ENCODE measurements at regions of chr5 and their contacts with region 1.

Region 1: GRCh38 chr5:181005791-181006190 is 17.1 kb downstream of the BTNL3 start:
- DNase-seq: no peak
- ATAC-seq: no peak
- H3K4me3 Mint-ChIP-seq: no peak overlapping the region
- H3K27ac Mint-ChIP-seq: no peak overlapping the region
- H3K4me1 Mint-ChIP-seq: no peaks in the 10 kb centered on the region
- H3K27me3 Mint-ChIP-seq: peaks cover 4% of the 10 kb centered on the region
- CTCF ChIP-seq: no peak

Region 2: GRCh38 chr5:180802325-180803180 is 203.2 kb before region 1 on chr5 and contains the start of gene MGAT1:
- CTCF ChIA-PET with region 1: no interaction called
- POLR2A ChIA-PET with region 1: no interaction called
- intact Hi-C with region 1: no loop called
- DNase-seq: peak; percentile 85
- ATAC-seq: peak; percentile 56
- H3K4me3 Mint-ChIP-seq: peak within 1 kb of the TSS; percentile 88
- H3K27ac Mint-ChIP-seq: peak within 1 kb of the TSS; percentile 99
- H3K4me1 Mint-ChIP-seq: peaks cover 70% of the 10 kb centered on the region
- H3K27me3 Mint-ChIP-seq: no peaks in the 10 kb centered on the region
- CTCF ChIP-seq: no peak
- total RNA-seq, gene MGAT1: 161 to 171 TPM

Region 3: DNA sequence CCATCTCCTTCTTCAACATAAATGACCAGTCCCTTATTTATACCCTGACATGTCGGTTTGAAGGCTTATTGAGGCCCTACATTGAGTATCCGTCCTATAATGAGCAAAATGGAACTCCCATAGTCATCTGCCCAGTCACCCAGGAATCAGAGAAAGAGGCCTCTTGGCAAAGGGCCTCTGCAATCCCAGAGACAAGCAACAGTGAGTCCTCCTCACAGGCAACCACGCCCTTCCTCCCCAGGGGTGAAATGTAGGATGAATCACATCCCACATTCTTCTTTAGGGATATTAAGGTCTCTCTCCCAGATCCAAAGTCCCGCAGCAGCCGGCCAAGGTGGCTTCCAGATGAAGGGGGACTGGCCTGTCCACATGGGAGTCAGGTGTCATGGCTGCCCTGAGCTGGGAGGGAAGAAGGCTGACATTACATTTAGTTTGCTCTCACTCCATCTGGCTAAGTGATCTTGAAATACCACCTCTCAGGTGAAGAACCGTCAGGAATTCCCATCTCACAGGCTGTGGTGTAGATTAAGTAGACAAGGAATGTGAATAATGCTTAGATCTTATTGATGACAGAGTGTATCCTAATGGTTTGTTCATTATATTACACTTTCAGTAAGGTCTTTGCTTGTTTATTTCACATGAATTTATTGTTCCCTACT is 55.4 kb before region 1 on chr5:
- CTCF ChIA-PET with region 1: no interaction called
- POLR2A ChIA-PET with region 1: no interaction called
- intact Hi-C with region 1: loop called (anchors 1 kb)
- DNase-seq: no peak
- ATAC-seq: no peak
- H3K4me3 Mint-ChIP-seq: no peak overlapping the region
- H3K27ac Mint-ChIP-seq: no peak overlapping the region
- H3K4me1 Mint-ChIP-seq: peaks cover 3% of the 10 kb centered on the region
- H3K27me3 Mint-ChIP-seq: no peaks in the 10 kb centered on the region
- CTCF ChIP-seq: no peak

Measured in activated CD8-positive, alpha-beta T cell treated with anti-CD3 and anti-CD28 coated beads for 36 hours (primary cell).